OCI-LY7 (cell line): ENCODE measurements at regions of chr15 and their contacts with region 1.

Region 1: DNA sequence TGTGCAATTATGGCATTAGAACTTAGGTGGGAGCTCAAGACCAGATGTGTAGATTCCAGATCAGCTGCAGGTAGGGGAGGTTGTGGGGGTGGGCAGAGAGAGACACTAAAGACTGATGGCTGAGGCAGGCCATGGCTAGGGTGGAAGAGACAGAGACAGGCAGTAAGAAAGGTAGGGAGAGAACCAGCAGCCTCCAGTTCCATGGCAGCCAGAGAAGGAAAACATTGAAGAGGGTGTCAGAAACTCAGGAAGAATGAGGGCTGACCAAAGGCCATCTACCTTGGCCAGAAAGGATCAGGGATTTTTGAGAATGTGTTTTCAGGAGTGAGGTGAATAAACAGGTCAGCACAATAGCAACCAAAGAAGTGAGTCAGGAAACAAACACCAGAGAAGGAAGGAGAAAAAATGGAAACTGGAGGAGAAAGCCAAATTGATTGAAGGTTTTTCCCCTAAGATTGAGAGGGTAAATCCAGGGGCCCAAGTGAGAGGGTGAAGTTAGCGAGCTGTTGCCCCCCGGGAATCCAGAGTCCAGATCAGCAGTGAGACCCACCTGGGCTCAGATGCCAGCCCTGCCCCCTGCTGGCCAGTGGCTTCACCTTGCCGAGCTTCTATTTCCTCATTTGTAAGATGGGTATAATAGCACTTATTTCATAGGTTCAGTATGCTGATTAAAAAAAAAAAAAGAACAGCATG is 41.0 kb downstream of the ABHD2 start:
- DNase-seq: peak; percentile 58
- H3K4me3 ChIP-seq: no peak overlapping the region
- H3K27ac ChIP-seq: no peak overlapping the region
- H3K4me1 ChIP-seq: no peaks in the 10 kb centered on the region
- CTCF ChIP-seq: peak; percentile 94

Region 2: DNA sequence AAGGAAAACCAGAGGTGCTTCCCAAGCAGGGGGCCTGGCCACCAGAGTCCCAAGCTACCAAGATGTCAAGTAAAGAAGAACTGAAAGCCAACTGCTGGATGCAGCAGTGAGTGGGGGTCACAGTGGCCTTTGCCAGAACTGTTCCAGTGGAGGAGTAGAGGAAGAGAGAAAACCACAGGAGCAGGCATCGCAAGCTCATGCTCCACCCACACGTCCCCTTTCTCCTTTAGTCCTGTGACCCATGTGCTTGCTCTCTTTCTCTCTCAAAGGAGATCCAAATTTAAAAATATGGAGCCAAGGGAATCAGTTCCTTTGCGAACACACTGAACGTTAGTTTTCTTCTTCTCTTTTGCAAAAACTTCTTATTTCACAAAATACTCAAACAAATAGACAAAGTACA is 53.4 kb before region 1 on chr15:
- CTCF ChIA-PET with region 1: interaction called, 3 read pairs
- POLR2A ChIA-PET with region 1: no interaction called
- intact Hi-C with region 1: loop called (anchors 5 kb)
- DNase-seq: no peak
- H3K4me3 ChIP-seq: no peak overlapping the region
- H3K27ac ChIP-seq: no peak overlapping the region
- H3K4me1 ChIP-seq: no peaks in the 10 kb centered on the region
- CTCF ChIP-seq: no peak